ENCODE measurements at regions of chr1 and their contacts with region 1.

Region 1: DNA sequence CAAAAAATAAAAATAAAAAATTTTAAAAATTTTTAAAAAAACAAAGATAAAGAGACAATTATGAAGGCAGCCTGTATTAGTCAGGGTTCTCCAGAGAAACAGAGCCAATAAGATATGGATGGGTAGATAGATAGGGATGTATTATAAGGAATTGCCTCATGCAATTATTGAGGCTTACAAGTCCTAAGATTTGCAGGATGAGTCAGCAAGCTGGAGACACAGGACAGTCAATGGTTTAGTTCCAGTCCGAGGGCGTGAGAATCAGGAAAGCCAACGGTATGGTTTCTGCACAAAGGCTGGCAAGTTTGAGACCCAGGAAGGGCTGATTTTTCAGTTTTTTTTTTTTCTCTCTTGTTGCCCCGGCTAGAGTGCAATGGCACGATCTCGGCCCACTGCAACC is 24.1 kb upstream of the EIF4G3 start:
- DNase-seq: no peak
- ATAC-seq: no peak
- H3K4me3 Mint-ChIP-seq: no peak overlapping the region
- H3K27ac Mint-ChIP-seq: no peak overlapping the region
- H3K4me1 Mint-ChIP-seq: no peaks in the 10 kb centered on the region
- H3K27me3 Mint-ChIP-seq: peaks cover 4% of the 10 kb centered on the region

Region 2: GRCh38 chr1:20696397-20697329 is 504.1 kb before region 1 on chr1:
- CTCF ChIA-PET with region 1: interaction called, 72 read pairs
- POLR2A ChIA-PET with region 1: no interaction called
- DNase-seq: peak; percentile 81
- ATAC-seq: peak; percentile 95
- H3K4me3 Mint-ChIP-seq: peak overlapping the region; percentile 86
- H3K27ac Mint-ChIP-seq: peak overlapping the region; percentile 77
- H3K4me1 Mint-ChIP-seq: peaks cover 18% of the 10 kb centered on the region
- H3K27me3 Mint-ChIP-seq: peaks cover 3% of the 10 kb centered on the region

Region 3: GRCh38 chr1:20981915-20982314 is 218.9 kb before region 1 on chr1:
- CTCF ChIA-PET with region 1: interaction called, 30 read pairs
- POLR2A ChIA-PET with region 1: no interaction called
- DNase-seq: no peak
- ATAC-seq: no peak
- H3K4me3 Mint-ChIP-seq: no peak overlapping the region
- H3K27ac Mint-ChIP-seq: no peak overlapping the region
- H3K4me1 Mint-ChIP-seq: no peaks in the 10 kb centered on the region
- H3K27me3 Mint-ChIP-seq: no peaks in the 10 kb centered on the region

Region 4: DNA sequence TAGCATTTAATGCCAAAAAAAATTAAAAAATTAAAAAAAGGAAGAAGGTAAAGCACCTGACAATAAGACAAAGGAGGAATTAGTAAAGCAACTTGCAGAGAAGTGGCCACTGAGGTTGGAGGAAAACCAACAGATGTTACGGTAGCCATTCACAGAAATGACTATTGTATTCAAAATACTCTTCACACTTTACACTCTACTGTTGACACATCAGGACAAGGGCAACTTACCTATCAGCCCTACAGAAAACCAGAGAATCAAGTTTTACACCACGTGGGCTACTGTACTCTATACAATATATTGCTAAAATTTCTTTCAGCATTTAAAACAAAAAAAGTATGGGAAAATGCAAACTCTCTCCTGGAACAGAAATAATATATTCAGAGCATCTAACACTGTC is 94.1 kb before region 1 on chr1:
- CTCF ChIA-PET with region 1: interaction called, 10 read pairs
- POLR2A ChIA-PET with region 1: no interaction called
- DNase-seq: no peak
- ATAC-seq: no peak
- H3K4me3 Mint-ChIP-seq: no peak overlapping the region
- H3K27ac Mint-ChIP-seq: no peak overlapping the region
- H3K4me1 Mint-ChIP-seq: no peaks in the 10 kb centered on the region
- H3K27me3 Mint-ChIP-seq: no peaks in the 10 kb centered on the region

Region 5: GRCh38 chr1:21184276-21184675 is 16.5 kb before region 1 on chr1:
- CTCF ChIA-PET with region 1: interaction called, 20 read pairs
- POLR2A ChIA-PET with region 1: no interaction called
- DNase-seq: no peak
- ATAC-seq: no peak
- H3K4me3 Mint-ChIP-seq: no peak overlapping the region
- H3K27ac Mint-ChIP-seq: no peak overlapping the region
- H3K4me1 Mint-ChIP-seq: peaks cover 4% of the 10 kb centered on the region
- H3K27me3 Mint-ChIP-seq: peaks cover 10% of the 10 kb centered on the region

Measured in activated CD8-positive, alpha-beta T cell treated with anti-CD3 and anti-CD28 coated beads, Interleukin-2, amount 10 ng/mL, durations not matched to agents 7 days and 5 days (primary cell).